Activated naive CD4-positive, alpha-beta T cell treated with anti-CD3 and anti-CD28 coated beads for 36 hours (primary cell): ENCODE measurements at regions of chr14 and their contacts with region 1.

Region 1: DNA sequence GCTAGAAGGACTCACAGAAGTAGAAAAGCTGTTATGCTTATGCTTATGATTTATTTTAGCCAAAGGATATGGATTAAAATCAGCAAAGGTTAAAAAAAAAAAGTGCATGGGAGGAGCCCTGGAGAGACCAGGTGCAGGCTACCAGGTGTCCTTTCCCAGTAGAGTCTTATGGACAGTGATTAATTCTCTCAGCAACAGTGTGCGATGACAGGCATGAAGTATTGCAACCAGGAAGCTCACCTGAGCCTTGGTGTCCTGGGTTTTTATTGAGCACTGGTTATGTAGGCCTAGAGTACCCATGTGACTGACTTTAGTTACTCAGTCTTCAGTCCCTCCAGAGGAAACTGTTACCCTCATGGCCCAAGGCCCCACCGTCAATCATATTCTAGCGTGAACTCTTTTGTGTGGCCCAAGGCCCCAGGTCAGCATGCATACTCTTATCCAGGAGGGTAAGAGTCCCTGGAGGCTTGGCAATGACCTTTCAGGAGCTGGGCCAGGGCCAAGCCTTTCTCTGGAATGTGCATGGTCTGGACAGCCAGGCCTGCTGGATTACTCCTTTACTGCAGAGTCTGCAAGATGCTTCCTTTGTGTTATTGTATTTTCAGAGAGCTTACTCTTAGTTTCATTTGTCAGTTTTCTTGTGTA is 69.6 kb upstream of the RD3L start:
- DNase-seq: no peak
- H3K4me3 Mint-ChIP-seq: no peak overlapping the region
- H3K27ac Mint-ChIP-seq: no peak overlapping the region
- H3K4me1 Mint-ChIP-seq: no peaks in the 10 kb centered on the region
- H3K27me3 Mint-ChIP-seq: no peaks in the 10 kb centered on the region

Region 2: DNA sequence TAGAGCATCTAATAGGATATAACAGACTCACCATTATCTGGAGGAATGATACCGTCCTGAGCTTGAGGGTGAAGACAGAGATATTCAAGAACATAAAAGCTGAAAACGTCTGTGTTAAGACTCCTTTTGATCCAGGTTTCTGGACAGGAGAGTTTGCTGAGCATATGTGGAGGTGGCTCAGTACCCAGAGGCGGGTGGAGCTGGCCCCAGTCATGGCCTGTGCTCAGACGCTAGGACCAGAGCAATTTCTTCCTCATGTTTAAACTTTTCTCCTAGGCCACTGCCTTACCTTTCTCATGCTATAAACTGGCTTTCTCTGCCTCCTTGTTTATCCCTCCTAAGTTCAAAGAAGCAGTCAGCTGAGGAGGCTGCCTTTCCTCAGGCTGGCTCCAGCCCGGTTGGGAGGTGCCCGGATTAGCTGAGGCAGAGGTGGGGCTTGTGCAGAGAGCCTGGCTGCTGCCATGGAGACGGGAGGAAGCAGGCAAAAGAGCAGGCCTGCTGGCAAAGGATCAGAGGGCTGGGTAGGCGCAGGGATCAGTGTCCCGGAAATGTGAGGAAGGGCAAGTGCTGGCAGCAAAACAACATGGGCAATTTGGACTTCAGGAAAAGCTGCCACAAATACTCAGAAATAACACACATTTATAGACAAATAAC is 435.4 kb before region 1 on chr14:
- CTCF ChIA-PET with region 1: no interaction called
- intact Hi-C with region 1: no loop called
- DNase-seq: no peak
- H3K4me3 Mint-ChIP-seq: no peak overlapping the region
- H3K27ac Mint-ChIP-seq: peak overlapping the region; percentile 52
- H3K4me1 Mint-ChIP-seq: no peaks in the 10 kb centered on the region
- H3K27me3 Mint-ChIP-seq: no peaks in the 10 kb centered on the region

Region 3: DNA sequence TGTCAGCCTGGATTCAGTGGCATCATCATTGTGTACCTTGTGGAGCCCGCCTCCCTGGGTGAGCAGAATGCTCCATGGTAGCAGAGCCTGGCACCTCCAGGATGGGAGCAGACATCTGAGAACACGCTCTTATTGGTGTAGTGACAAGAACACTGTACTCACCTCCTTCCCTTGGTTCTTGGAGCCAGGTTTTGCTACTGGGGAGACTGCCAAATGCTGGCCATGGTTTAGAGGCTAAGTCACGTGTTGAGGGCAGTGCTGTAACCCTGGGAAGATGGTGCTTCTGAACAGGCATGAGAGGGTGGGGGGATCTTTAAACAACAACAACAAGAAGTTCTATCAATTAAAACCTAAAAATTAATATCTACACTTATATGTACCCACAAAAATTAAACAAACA is 26.0 kb after region 1 on chr14:
- CTCF ChIA-PET with region 1: no interaction called
- intact Hi-C with region 1: no loop called
- DNase-seq: no peak
- H3K4me3 Mint-ChIP-seq: no peak overlapping the region
- H3K27ac Mint-ChIP-seq: no peak overlapping the region
- H3K4me1 Mint-ChIP-seq: no peaks in the 10 kb centered on the region
- H3K27me3 Mint-ChIP-seq: peaks cover 15% of the 10 kb centered on the region

Region 4: GRCh38 chr14:104341532-104342434 is 329.8 kb after region 1 on chr14:
- CTCF ChIA-PET with region 1: no interaction called
- intact Hi-C with region 1: no loop called
- DNase-seq: peak; percentile 48
- H3K4me3 Mint-ChIP-seq: no peak overlapping the region
- H3K27ac Mint-ChIP-seq: no peak overlapping the region
- H3K4me1 Mint-ChIP-seq: no peaks in the 10 kb centered on the region
- H3K27me3 Mint-ChIP-seq: peaks cover 2% of the 10 kb centered on the region

Region 5: DNA sequence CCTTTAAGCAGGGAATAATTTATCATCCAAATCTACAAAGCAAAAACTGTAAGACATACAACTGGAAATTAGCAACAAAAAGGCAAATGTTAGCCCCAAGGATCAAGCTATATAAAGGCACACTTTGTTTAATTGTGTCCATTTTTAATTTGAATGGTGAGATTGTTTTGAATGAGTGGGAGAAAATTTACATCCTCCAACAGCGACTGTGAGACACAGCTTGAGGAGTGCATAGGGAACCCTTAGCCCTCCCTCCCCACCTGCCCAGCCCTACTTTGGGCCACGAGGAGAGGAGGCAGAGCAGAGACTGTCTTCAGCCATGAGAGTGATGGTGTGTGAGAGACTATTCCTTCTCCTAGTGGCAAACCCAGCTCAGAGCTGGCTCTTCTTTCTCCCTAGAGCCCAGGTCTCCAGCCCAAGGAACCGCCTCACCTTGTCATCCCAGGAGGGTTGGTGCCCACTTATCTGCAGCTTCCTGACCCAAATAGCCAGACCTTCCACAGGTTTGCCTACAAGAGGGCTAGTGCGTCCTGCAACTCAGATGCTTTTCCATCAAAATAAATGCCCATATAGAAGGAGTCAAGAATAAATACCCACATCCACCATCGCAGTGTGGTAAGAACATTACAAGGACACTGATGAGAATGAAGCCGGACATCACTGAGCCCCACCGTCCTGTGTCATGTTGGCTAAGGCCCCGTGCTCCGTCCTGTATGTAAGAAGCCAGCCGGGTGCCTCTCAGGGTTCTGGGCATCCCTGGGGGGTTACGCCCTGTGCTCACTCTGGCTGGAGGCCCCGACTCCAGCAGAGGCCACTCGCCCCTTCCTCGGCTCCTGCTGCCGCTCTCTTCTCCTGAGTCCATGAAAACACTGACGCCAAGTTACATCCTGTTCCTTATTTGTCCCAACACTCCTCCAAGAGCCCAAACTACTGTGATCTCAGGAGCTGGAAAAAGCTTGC is 531.2 kb after region 1 on chr14:
- CTCF ChIA-PET with region 1: no interaction called
- intact Hi-C with region 1: loop called (anchors 5 kb)
- DNase-seq: peak; percentile 2
- H3K4me3 Mint-ChIP-seq: no peak overlapping the region
- H3K27ac Mint-ChIP-seq: no peak overlapping the region
- H3K4me1 Mint-ChIP-seq: no peaks in the 10 kb centered on the region
- H3K27me3 Mint-ChIP-seq: peaks cover 6% of the 10 kb centered on the region